HCT116 (cell line): ENCODE measurements at regions of chr3 and their contacts with region 1.

Region 1: DNA sequence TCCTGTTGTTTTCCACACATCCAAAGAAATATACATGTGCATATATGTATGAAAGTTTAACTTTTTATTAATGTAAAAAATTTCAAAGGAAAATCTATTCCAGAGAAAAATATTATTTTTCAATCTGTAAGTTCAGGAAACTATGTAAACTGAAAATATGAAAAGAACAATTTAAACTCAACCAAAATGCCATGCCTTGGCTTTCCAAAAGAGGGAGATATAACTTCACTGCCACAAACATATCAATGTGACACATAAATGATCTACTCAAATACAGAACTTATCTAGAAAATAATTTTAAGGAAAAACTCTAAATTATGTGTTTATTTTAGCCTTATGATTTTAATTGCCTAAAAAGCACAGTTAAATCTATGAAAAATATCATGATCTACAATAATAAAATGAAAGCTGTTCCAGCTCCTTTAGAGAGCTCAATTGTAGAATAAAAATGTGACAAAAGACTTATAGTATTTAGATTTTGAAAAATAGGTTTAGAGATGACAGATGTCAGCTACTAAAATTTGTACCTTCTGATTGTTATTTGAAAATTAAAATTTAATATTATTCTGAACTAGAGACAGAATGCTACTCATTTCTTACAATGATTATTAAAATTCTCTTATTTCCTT is 94.8 kb downstream of the GBE1 start:
- DNase-seq: no peak
- ATAC-seq: no peak
- H3K4me3 ChIP-seq: no peak overlapping the region
- H3K27ac ChIP-seq: no peak overlapping the region
- H3K4me1 ChIP-seq: no peaks in the 10 kb centered on the region
- H3K27me3 ChIP-seq: no peaks in the 10 kb centered on the region
- CTCF ChIP-seq: peak; percentile 18 to 74 (median 64); a peak in 5 of 6 replicates
- POLR2A ChIP-seq: no peak
- RAD21 ChIP-seq: peak; percentile 61

Region 2: GRCh38 chr3:81851176-81851575 is 184.6 kb after region 1 on chr3:
- CTCF ChIA-PET with region 1: no interaction called
- POLR2A ChIA-PET with region 1: no interaction called
- RAD21 ChIA-PET with region 1: no interaction called
- intact Hi-C with region 1: loop called (anchors 10 kb)
- DNase-seq: no peak
- ATAC-seq: no peak
- H3K4me3 ChIP-seq: no peak overlapping the region
- H3K27ac ChIP-seq: no peak overlapping the region
- H3K4me1 ChIP-seq: no peaks in the 10 kb centered on the region
- H3K27me3 ChIP-seq: no peaks in the 10 kb centered on the region; the same call in 1 of the 2 replicates
- CTCF ChIP-seq: no peak
- POLR2A ChIP-seq: no peak
- RAD21 ChIP-seq: no peak

Region 3: GRCh38 chr3:81910244-81910852 is 243.7 kb after region 1 on chr3:
- CTCF ChIA-PET with region 1: no interaction called
- POLR2A ChIA-PET with region 1: no interaction called
- RAD21 ChIA-PET with region 1: no interaction called
- intact Hi-C with region 1: loop called (anchors 10 kb)
- DNase-seq: peak; percentile 23
- ATAC-seq: peak; percentile 78
- H3K4me3 ChIP-seq: no peak overlapping the region
- H3K27ac ChIP-seq: no peak overlapping the region
- H3K4me1 ChIP-seq: no peaks in the 10 kb centered on the region
- H3K27me3 ChIP-seq: no peaks in the 10 kb centered on the region
- CTCF ChIP-seq: peak; percentile 31 to 88 (median 73); a peak in 5 of 6 replicates
- POLR2A ChIP-seq: no peak
- RAD21 ChIP-seq: peak; percentile 36

Region 4: GRCh38 chr3:82133070-82133606 is 466.5 kb after region 1 on chr3:
- CTCF ChIA-PET with region 1: no interaction called
- POLR2A ChIA-PET with region 1: no interaction called
- RAD21 ChIA-PET with region 1: no interaction called
- intact Hi-C with region 1: loop called (anchors 1 kb)
- DNase-seq: peak; percentile 35
- ATAC-seq: peak; percentile 81
- H3K4me3 ChIP-seq: no peak overlapping the region
- H3K27ac ChIP-seq: no peak overlapping the region
- H3K4me1 ChIP-seq: no peaks in the 10 kb centered on the region
- H3K27me3 ChIP-seq: no peaks in the 10 kb centered on the region
- CTCF ChIP-seq: peak; percentile 21 to 75 (median 75); a peak in 5 of 6 replicates
- POLR2A ChIP-seq: no peak
- RAD21 ChIP-seq: peak; percentile 38; the same call in 1 of the 2 replicates